Gastrocnemius medialis (tissue), 4 donors: ENCODE measurements at regions of chr2 and their contacts with region 1.

Region 1: GRCh38 chr2:109318150-109318948 is 189.3 kb downstream of the SH3RF3 start:
- DNase-seq: peak; percentile 70 to 71
- ATAC-seq: peak; percentile 71 to 73
- H3K4me3 ChIP-seq: peak overlapping the region; percentile 7 to 29 (median 24)
- H3K27ac ChIP-seq: peak overlapping the region; percentile 68 to 77 (median 74)
- H3K4me1 ChIP-seq: peaks cover 50 to 53% of the 10 kb centered on the region in 2 donors
- H3K27me3 ChIP-seq: no peaks in the 10 kb centered on the region
- CTCF ChIP-seq: peak in 2 of 5 experiments; percentile 7 to 36
- POLR2A ChIP-seq: no peak

Region 2: DNA sequence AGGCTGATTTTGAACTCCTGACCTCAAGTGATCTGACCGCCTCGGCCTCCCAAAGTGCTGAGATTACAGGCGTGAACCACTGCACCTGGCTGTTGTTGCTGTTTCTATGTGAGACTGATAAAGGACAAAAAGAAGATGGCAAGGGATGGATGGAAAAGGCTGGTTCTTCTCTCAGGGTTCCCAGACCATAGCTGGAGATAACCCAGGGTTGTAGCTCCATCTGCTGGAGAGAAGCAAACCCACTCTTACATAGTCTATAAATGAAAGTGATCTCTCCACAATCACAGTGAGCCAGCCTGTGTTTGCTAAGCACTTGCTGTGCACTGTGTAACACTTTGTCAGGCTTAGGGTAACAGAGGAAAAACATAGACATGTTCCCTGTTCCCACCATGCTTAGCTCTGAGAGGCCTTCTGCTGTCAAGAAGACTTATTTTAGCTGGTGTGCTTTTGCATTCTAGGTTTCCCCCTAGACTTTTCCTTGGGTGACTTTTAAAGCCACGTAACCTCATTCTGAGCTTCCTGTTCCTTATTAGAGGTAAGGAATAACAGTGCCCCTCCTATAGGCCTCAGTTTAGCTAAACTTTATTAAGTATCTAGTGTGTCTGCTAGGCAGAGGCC is 734.3 kb before region 1 on chr2:
- in situ Hi-C with region 1: no loop called
- intact Hi-C with region 1: no loop called
- DNase-seq: peak; percentile 52 to 71
- ATAC-seq: peak; percentile 77 to 85
- H3K4me3 ChIP-seq: no peak overlapping the region
- H3K27ac ChIP-seq: peak overlapping the region; percentile 30 to 79 (median 64)
- H3K4me1 ChIP-seq: peaks cover 56 to 57% of the 10 kb centered on the region in 2 donors
- H3K27me3 ChIP-seq: no peaks in the 10 kb centered on the region
- CTCF ChIP-seq: peak; percentile 70 to 82 (median 78)
- POLR2A ChIP-seq: no peak

Region 3: GRCh38 chr2:109128048-109128465 is 190.3 kb before region 1 on chr2:
- in situ Hi-C with region 1: loop called in 1 of 4 experiments (anchors 25 kb)
- intact Hi-C with region 1: loop called (anchors 2 kb)
- DNase-seq: peak; percentile 71 to 75
- ATAC-seq: peak; percentile 71 to 78
- H3K4me3 ChIP-seq: peak overlapping the region; percentile 63 to 82 (median 70)
- H3K27ac ChIP-seq: peak overlapping the region; percentile 59 to 79 (median 67)
- H3K4me1 ChIP-seq: peaks cover 4 to 7% of the 10 kb centered on the region in 2 donors
- H3K27me3 ChIP-seq: no peaks in the 10 kb centered on the region
- CTCF ChIP-seq: peak; percentile 91 to 95 (median 94)
- POLR2A ChIP-seq: peak; percentile 56 to 61

Region 4: DNA sequence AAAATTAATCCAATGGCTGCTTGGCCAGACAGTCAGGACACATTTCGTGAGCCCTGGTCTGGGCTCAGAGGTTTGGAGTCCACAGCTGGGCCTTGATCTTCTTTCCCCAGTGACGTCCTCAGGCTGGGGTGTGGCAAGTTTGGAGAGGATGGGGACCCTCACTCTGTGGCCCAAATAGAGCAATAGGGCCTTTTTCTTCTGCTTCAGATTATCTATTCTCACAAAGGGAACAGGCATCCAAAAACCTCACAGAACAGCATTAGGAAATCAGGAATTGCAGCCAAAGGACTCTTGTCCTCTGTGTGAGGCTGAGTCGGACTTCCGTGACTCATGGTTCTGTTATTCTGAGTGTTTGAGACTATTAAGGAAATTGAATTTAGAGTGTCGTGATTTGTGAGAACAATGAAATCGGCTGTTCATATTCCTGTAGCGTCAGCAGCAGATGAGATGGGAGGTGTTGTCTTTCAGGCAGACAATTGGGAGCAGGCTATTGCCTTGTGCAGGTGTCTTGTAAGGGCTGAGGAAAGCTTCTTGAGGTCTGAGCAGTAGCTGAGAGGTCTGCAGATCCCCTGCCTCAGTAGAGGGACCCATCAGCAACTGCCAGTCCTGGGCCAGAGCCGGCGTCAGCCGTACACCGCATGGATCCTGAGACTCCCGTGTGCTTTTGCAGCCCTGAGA is 75.6 kb before region 1 on chr2:
- in situ Hi-C with region 1: no loop called
- intact Hi-C with region 1: loop called (anchors 5 kb)
- DNase-seq: peak in 1 of 2 donors; percentile 52
- ATAC-seq: peak; percentile 73 to 83
- H3K4me3 ChIP-seq: no peak overlapping the region
- H3K27ac ChIP-seq: peak overlapping the region; percentile 72 to 82 (median 76)
- H3K4me1 ChIP-seq: peaks cover 40 to 56% of the 10 kb centered on the region in 2 donors
- H3K27me3 ChIP-seq: no peaks in the 10 kb centered on the region
- CTCF ChIP-seq: no peak
- POLR2A ChIP-seq: peak in 1 of 2 donors; percentile 19

Region 5: DNA sequence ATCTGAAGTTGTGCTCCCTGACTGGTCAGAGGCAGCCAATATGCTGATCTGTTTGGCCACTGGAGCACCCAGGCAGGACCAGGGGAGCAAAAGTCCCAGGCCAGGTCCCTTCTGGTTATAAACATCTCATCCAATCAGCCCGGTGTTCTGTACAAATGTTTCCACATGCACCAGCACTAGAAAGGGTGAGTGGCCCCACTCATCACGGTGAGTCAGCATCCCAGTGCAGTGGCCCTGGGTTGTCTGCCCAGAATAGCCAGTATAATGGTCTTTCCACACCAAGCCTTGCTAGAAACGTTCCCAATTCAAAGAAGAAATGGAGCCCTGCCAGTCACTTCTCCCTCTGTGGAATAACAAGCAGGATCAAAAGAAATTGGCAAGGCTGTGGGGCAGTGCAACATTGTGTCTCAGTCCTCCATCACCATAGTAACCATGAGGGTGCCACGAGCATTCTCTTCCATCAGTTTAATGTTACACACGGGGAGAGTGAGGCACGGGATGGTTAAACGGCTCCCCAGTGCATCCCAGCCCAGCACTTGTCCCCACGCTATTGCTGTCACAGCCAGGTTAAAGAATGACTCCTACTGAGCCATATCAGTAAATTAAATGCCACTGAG is 120.5 kb after region 1 on chr2:
- in situ Hi-C with region 1: no loop called
- intact Hi-C with region 1: loop called (anchors 5 kb)
- DNase-seq: peak; percentile 80
- ATAC-seq: peak; percentile 62 to 73
- H3K4me3 ChIP-seq: no peak overlapping the region
- H3K27ac ChIP-seq: peak overlapping the region; percentile 68 to 86 (median 84)
- H3K4me1 ChIP-seq: peaks cover 45 to 46% of the 10 kb centered on the region in 2 donors
- H3K27me3 ChIP-seq: no peaks in the 10 kb centered on the region
- CTCF ChIP-seq: no peak
- POLR2A ChIP-seq: peak in 1 of 2 donors; percentile 23